ENCODE measurements at regions of chr9 and their contacts with region 1.

Region 1: DNA sequence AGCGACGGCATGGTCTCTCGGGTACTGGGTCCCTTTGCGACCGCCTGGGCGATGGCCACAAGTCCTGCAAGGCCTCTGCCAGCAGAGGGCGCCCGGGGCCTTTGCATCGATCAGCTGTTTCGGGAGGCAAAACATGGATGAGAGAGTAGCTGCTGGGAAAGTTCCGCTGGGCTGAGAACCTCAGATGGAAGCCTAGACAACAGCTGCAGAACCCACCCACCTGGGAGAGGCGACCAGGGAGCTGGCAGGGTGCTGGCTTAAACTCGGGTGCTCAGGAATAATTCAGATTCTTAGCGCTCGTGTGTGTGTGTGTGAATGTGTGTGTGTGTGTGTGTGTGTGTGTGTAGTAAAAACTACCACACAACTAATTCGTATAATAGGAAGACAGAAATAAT is 50.0 kb downstream of the TRIM32 start:
- DNase-seq: peak; percentile 72
- H3K4me3 Mint-ChIP-seq: no peak overlapping the region
- H3K27ac Mint-ChIP-seq: no peak overlapping the region
- H3K4me1 Mint-ChIP-seq: no peaks in the 10 kb centered on the region
- H3K27me3 Mint-ChIP-seq: peaks cover 21% of the 10 kb centered on the region

Region 2: GRCh38 chr9:116726602-116727001 is 10.5 kb before region 1 on chr9:
- CTCF ChIA-PET with region 1: interaction called, 11 read pairs
- intact Hi-C with region 1: no loop called
- DNase-seq: no peak
- H3K4me3 Mint-ChIP-seq: no peak overlapping the region
- H3K27ac Mint-ChIP-seq: no peak overlapping the region
- H3K4me1 Mint-ChIP-seq: no peaks in the 10 kb centered on the region
- H3K27me3 Mint-ChIP-seq: peaks cover 6% of the 10 kb centered on the region

Region 3: DNA sequence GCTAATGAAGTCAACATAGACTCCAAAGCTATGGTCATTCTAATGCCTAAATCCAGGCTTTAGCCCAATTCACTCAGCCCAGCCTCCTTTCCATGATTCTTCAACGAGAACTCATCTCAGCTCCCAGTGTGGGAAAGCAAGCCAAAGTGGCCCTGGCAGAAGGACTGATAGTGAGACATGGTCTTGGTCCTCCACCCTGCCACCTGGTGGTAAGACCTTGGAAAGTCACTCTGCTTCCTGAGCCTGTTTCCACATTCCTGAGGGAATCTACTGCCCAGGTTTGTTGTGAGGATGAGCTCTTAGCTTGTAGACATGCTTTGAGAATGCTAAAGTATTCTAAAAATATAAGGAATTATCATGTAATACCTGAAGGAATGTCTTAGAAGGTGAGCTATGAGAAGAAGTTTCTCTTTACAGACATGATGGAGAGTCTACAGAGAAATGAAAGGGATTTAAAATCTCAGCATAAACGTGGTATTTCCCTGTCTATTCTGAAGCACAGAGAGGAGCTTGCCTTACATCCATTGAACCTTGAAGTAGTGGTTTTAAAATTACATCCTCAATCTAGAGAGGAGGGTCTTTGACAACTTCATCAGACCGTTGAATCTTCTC is 123.5 kb after region 1 on chr9:
- CTCF ChIA-PET with region 1: interaction called, 28 read pairs
- intact Hi-C with region 1: no loop called
- DNase-seq: peak; percentile 37
- H3K4me3 Mint-ChIP-seq: no peak overlapping the region
- H3K27ac Mint-ChIP-seq: no peak overlapping the region
- H3K4me1 Mint-ChIP-seq: no peaks in the 10 kb centered on the region
- H3K27me3 Mint-ChIP-seq: peaks cover 7% of the 10 kb centered on the region

Region 4: GRCh38 chr9:117555964-117556629 is 818.9 kb after region 1 on chr9:
- CTCF ChIA-PET with region 1: no interaction called
- intact Hi-C with region 1: loop called (anchors 5 kb)
- DNase-seq: peak; percentile 61
- H3K4me3 Mint-ChIP-seq: no peak overlapping the region
- H3K27ac Mint-ChIP-seq: no peak overlapping the region
- H3K4me1 Mint-ChIP-seq: no peaks in the 10 kb centered on the region
- H3K27me3 Mint-ChIP-seq: peaks cover 11% of the 10 kb centered on the region

Measured in activated naive CD4-positive, alpha-beta T cell treated with anti-CD3 and anti-CD28 coated beads for 36 hours (primary cell).